Heart right ventricle (tissue), 16 donors: ENCODE measurements at regions of chr21 and their contacts with region 1.

Region 1: GRCh38 chr21:27818847-27819246 is 852.0 kb upstream of the ADAMTS5 start:
- DNase-seq: no peak
- ATAC-seq: no peak
- H3K4me3 ChIP-seq: no peak overlapping the region
- H3K27ac ChIP-seq: peak overlapping the region in 3 of 10 donors; percentile 13 to 69 (median 45)
- H3K4me1 ChIP-seq: peaks cover 0 to 26% (median 0%) of the 10 kb centered on the region in 9 donors
- H3K27me3 ChIP-seq: no peaks in the 10 kb centered on the region
- CTCF ChIP-seq: no peak

Region 2: GRCh38 chr21:27837936-27838335 is 19.1 kb after region 1 on chr21:
- intact Hi-C with region 1: loop called in 1 of 10 experiments (anchors 1 kb)
- DNase-seq: peak in 1 of 2 donors; percentile 19
- ATAC-seq: peak in 3 of 8 donors; percentile 33 to 71 (median 67)
- H3K4me3 ChIP-seq: no peak overlapping the region
- H3K27ac ChIP-seq: peak overlapping the region in 2 of 10 donors; percentile 14 to 25
- H3K4me1 ChIP-seq: peaks cover 0 to 4% (median 0%) of the 10 kb centered on the region in 9 donors
- H3K27me3 ChIP-seq: no peaks in the 10 kb centered on the region
- CTCF ChIP-seq: no peak